OCI-LY7 (cell line): ENCODE measurements at regions of chr2 and their contacts with region 1.

Region 1: GRCh38 chr2:224520064-224520463 is 65.1 kb downstream of the CUL3 start:
- DNase-seq: peak; percentile 33
- H3K4me3 ChIP-seq: peak overlapping the region; percentile 64
- H3K27ac ChIP-seq: peak overlapping the region; percentile 97
- H3K4me1 ChIP-seq: peaks cover 81% of the 10 kb centered on the region
- CTCF ChIP-seq: no peak

Region 2: DNA sequence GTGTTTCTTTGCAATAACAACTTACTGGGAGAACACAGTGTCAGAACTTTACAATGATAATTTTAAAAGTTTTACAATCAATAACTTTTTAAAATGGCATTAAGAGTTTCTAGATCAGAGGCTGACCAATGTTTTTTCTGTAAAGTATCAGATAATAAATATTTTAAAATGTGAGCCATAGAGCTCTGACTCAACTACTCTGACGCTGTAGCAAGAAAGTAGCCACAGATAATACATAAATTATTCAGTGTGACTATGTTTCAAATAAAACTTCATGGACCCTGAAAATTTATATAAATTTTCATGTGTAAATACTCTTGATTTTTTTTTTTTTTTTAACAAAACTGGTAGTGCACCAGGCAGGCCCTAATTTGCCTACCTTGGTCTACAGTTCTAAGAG is 12.3 kb before region 1 on chr2:
- CTCF ChIA-PET with region 1: no interaction called
- POLR2A ChIA-PET with region 1: interaction called, 48 read pairs
- intact Hi-C with region 1: no loop called
- DNase-seq: no peak
- H3K4me3 ChIP-seq: no peak overlapping the region
- H3K27ac ChIP-seq: no peak overlapping the region
- H3K4me1 ChIP-seq: no peaks in the 10 kb centered on the region
- CTCF ChIP-seq: no peak

Region 3: DNA sequence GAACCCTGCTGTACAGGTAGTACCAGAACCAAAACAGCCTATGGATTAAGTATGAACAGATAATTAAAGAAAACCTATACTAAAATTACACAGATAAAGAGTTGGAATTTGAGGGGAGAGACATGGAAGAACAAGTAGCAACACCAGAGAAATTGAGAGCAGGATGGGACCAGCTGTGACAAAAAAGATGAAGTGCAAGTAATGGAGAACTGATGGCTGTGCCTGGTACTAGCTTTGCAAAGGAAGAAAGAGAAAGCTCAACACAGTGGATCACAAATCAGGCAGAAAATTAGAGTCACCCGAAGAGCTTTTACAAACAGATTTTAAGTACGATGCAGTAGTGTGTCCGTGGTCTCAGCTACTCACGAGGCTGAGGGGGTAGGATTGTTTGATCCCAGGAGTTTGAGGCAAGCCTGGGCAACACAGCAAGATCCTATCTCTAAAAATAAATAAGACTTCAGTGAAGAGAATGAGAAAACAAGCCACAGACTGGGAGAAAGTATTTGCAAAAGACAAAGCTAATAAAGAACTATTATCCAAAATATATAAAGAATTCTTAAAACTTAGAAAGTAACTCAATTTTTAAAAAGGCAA is 18.6 kb after region 1 on chr2:
- CTCF ChIA-PET with region 1: interaction called, 6 read pairs
- POLR2A ChIA-PET with region 1: interaction called, 46 read pairs
- intact Hi-C with region 1: no loop called
- DNase-seq: no peak
- H3K4me3 ChIP-seq: no peak overlapping the region
- H3K27ac ChIP-seq: no peak overlapping the region
- H3K4me1 ChIP-seq: no peaks in the 10 kb centered on the region
- CTCF ChIP-seq: no peak

Region 4: GRCh38 chr2:224570328-224570993 is 50.4 kb after region 1 on chr2:
- CTCF ChIA-PET with region 1: no interaction called
- POLR2A ChIA-PET with region 1: interaction called, 15 read pairs
- intact Hi-C with region 1: no loop called
- DNase-seq: no peak
- H3K4me3 ChIP-seq: no peak overlapping the region
- H3K27ac ChIP-seq: no peak overlapping the region
- H3K4me1 ChIP-seq: peaks cover 55% of the 10 kb centered on the region
- CTCF ChIP-seq: no peak

Region 5: DNA sequence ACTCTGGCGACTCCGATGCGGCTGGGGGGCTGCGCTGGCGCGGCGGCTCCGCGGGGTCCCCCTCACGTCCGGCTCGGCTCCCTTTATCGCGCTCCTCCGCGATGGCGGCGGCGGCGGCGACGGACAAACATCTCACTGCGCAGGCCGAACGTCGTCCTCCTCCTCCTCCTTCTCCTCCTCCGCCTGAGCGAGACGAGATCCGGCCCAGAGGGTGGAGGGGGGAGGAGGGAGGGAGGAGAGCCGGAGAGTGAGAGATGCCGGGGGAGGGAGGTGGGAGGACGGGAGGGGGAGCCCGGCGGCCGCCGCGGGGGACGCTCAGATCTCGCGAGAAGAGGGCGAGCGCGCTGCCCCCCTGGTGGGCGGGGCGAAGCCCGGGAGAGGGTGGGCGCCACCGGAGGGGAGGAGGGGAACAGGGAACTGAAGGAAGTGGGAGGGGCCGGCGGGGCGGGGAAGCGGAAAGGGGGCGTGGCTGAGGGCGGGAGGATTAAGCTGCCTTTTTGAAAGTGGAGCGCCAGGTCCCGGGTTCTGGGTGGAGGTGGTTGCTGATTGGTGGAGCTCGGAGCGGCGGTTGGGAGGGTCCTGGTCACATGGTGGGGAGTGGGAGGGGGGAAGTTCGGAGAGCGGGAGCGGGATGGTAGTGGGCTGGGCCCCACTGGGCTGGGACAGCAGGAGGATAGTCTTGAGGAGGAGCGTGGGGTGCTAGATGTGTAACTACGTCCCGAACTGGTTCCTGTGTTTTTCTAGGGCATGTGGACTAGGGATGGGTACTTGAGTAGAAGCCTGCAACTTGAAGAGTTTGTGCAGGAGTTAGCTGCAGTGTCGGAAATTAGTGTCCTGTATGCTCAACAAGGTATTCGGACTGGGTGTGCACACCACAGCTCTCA is 65.4 kb after region 1 on chr2 and contains the start of gene CUL3:
- CTCF ChIA-PET with region 1: interaction called, 3 read pairs
- POLR2A ChIA-PET with region 1: interaction called, 38 read pairs
- intact Hi-C with region 1: loop called (anchors 1 kb)
- DNase-seq: peak; percentile 98
- H3K4me3 ChIP-seq: peak within 1 kb of the TSS; percentile 98
- H3K27ac ChIP-seq: peak within 1 kb of the TSS; percentile 92
- H3K4me1 ChIP-seq: peaks cover 51% of the 10 kb centered on the region
- CTCF ChIP-seq: no peak
- total RNA-seq, gene CUL3: 50.6 and 56.4 TPM in 2 replicates